Right ventricle myocardium superior (tissue), 1 donor: ENCODE measurements at regions of chr7 and their contacts with region 1.

Region 1: GRCh38 chr7:140003913-140004382 is 58.8 kb downstream of the PARP12 start:
- DNase-seq: no peak
- ATAC-seq: no peak

Region 2: DNA sequence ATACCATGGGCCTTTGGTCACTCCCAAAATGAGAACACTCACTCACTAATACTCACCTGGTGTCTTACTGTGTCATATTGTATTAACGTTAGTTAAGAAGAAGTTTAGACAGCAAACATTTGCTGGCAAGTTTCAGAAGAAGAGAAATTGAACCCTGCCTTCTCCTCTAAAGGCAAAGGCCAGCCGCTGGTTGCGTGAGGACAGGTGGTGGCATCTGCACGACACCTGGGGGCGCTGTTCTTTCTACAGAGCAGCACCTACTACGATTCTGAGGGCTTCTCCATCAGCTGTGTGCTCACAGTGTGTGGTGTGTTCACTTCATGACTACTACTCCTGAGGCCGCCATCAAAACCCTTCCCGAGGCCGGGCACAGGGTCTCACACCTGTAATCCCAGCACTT is 498.4 kb before region 1 on chr7:
- intact Hi-C with region 1: loop called (anchors 5 kb)
- DNase-seq: no peak
- ATAC-seq: no peak

Region 3: GRCh38 chr7:139618482-139619366 is 385.2 kb before region 1 on chr7:
- intact Hi-C with region 1: loop called (anchors 5 kb)
- DNase-seq: peak; percentile 46
- ATAC-seq: peak; percentile 55

Region 4: DNA sequence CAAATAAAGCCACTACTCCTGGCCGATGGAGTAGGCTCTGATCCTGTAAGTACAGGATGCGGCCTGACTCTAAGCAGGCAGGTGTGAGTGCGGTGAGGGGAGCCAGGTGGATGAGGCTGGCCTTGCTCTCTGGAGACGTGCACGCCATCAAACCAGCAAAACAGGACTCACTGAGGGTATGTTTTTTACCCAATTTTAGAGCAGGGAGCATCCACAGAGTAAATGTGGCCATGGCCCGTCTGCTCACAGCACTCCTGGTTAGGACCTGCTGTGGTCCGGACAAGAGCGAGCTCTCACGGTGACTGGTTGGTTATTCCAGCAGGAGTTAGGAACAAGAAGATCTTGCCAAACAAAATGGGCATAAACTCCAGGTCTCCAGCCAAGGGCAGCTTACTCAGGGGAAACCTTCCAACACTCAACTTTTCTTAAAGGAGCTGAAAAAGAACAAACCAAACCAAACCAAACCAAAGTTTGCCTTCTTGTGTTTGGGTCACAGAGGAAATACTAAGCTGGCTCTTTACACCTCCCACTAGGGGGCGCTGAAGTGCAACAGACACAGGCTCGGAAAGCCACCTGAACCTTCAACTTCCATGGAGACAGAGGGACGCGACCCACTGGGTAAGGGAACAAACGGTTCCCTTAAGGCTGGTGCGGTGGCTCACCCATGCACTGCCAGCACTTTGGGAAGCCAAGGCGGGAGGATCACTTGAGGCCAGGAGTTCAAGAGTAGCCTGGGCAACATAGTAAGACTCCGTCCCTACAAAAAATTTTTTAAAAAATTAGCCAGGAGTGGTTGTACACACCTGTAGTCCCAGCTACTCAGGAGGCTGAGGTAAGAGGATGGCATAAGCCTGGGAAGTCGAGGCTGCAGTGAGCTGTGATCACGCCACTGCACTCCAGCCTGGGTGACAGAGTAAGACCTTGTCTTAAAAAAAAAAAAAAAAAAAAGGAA is 358.1 kb before region 1 on chr7:
- intact Hi-C with region 1: loop called (anchors 2 kb)
- DNase-seq: peak; percentile 78
- ATAC-seq: peak; percentile 74

Region 5: GRCh38 chr7:139777948-139778841 is 225.8 kb before region 1 on chr7 and contains the start of gene HIPK2:
- intact Hi-C with region 1: loop called (anchors 5 kb)
- DNase-seq: peak; percentile 92
- ATAC-seq: peak; percentile 85
- total RNA-seq, gene HIPK2: 88.5 TPM